ENCODE measurements at regions of chr10 and their contacts with region 1.

Region 1: GRCh38 chr10:100508691-100509150 is 10.9 kb downstream of the SEC31B start:
- DNase-seq: peak; percentile 59
- ATAC-seq: peak; percentile 52
- H3K4me3 Mint-ChIP-seq: peak overlapping the region; percentile 35
- H3K27ac Mint-ChIP-seq: peak overlapping the region; percentile 86
- H3K4me1 Mint-ChIP-seq: peaks cover 69% of the 10 kb centered on the region
- H3K27me3 Mint-ChIP-seq: no peaks in the 10 kb centered on the region

Region 2: GRCh38 chr10:100338434-100339036 is 170.2 kb before region 1 on chr10:
- CTCF ChIA-PET with region 1: interaction called, 34 read pairs
- POLR2A ChIA-PET with region 1: no interaction called
- intact Hi-C with region 1: loop called (anchors 1 kb)
- DNase-seq: peak; percentile 90
- ATAC-seq: peak; percentile 85
- H3K4me3 Mint-ChIP-seq: no peak overlapping the region
- H3K27ac Mint-ChIP-seq: no peak overlapping the region
- H3K4me1 Mint-ChIP-seq: no peaks in the 10 kb centered on the region
- H3K27me3 Mint-ChIP-seq: no peaks in the 10 kb centered on the region

Region 3: DNA sequence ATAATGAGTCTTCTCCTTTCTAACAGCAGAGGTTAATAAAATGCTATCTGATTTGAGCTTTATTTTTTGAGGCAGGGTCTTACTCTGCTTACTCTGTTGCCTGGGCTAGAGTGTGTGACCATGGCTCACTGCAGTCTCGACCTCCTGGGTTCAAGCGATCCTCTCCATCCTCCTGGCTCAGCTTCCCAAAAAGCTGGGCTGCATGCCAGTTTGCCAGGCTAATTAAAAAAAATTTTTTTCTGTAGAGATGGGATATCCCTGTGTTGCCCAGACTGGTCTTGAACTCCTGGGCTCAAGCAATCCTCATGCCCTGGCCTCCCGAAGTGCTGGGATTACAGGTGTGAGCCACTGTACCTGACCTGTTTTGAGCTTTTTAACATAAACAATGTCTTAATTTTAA is 105.0 kb before region 1 on chr10:
- CTCF ChIA-PET with region 1: no interaction called
- POLR2A ChIA-PET with region 1: no interaction called
- intact Hi-C with region 1: no loop called
- DNase-seq: no peak
- ATAC-seq: no peak
- H3K4me3 Mint-ChIP-seq: no peak overlapping the region
- H3K27ac Mint-ChIP-seq: no peak overlapping the region
- H3K4me1 Mint-ChIP-seq: no peaks in the 10 kb centered on the region
- H3K27me3 Mint-ChIP-seq: no peaks in the 10 kb centered on the region

Region 4: DNA sequence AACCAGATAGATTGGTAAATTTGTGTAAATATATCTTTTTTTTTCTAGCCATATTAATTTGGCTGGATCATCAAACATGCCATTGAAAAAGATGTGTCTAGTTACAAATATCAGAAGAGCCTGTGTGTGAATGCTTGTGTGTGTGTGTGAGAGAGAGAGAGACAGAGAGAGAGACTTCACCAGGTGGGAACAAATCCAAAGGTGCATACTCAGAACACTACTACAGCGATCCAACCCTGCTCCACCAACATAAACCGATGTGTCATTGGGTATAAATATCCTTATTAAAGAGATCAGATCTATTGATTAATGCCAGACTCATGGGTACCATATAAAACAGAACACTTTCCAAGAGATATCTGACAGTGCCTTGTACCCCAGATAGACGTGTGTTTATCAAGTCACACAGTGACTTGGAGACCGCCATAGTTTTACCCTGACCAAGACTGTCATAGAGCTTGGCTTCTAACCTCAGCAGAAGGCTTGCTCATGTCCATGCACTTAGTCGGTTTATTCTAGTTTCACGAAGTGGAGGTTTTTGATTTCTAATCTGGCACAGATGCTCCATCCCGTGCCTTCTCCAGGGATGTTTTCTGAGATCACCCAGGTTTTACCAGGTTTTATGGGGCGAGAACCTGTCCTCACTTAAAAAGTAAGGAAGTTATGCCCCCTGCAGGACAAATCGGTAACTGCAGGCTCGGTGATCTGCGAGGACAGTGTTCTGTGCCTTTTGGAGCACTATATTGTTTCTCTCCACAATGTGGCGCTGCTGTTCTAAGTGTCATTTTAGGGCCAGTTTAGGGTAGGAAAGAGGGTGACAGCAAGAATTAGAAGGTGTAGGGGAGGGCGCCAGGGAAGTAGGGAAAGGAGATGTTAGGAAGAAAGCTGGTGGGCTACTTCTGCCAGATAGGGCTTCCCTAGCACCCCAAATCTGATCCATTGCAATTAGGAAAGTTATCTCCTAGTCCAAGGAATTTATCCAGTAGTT is 75.2 kb before region 1 on chr10:
- CTCF ChIA-PET with region 1: interaction called, 117 read pairs
- POLR2A ChIA-PET with region 1: no interaction called
- intact Hi-C with region 1: loop called (anchors 1 kb)
- DNase-seq: peak; percentile 98
- ATAC-seq: peak; percentile 98
- H3K4me3 Mint-ChIP-seq: peak overlapping the region; percentile 7
- H3K27ac Mint-ChIP-seq: no peak overlapping the region
- H3K4me1 Mint-ChIP-seq: peaks cover 5% of the 10 kb centered on the region
- H3K27me3 Mint-ChIP-seq: peaks cover 2% of the 10 kb centered on the region

Region 5: DNA sequence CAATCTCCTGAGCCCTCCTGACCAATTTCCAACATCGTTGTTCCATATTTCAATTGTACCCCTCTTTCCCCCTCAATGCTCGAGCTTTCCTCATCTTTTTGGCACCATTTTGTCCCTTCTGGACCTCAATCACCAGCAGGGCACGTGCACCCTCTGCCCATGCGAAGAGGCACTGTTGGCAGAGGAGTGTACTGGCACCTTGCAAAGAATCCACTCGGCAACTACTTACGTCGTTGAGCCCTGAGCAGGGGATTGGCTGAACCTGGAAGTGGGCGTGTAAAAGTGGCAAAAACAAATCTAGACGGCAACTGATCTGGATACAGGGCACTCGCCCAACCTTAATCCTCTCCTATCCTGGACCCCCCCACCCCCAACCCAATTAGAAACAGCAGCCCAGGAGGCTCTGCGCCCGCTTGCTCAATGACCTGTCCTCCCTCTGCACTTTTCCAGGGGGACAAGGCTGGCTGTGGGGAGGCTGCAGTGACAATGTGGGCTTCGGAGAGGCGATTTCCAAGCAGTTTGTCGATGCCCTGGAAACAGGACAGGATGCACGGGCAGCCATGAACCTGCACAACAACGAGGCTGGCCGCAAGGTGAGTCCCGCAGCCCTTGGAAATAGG is 27.1 kb before region 1 on chr10:
- CTCF ChIA-PET with region 1: interaction called, 131 read pairs
- POLR2A ChIA-PET with region 1: interaction called, 3 read pairs
- intact Hi-C with region 1: loop called (anchors 1 kb)
- DNase-seq: peak; percentile 92
- ATAC-seq: peak; percentile 96
- H3K4me3 Mint-ChIP-seq: peak overlapping the region; percentile 71
- H3K27ac Mint-ChIP-seq: no peak overlapping the region
- H3K4me1 Mint-ChIP-seq: peaks cover 5% of the 10 kb centered on the region
- H3K27me3 Mint-ChIP-seq: peaks cover 13% of the 10 kb centered on the region

Region 6: GRCh38 chr10:100529475-100530298 is 21.0 kb after region 1 on chr10 and contains the start of gene NDUFB8:
- CTCF ChIA-PET with region 1: interaction called, 91 read pairs
- POLR2A ChIA-PET with region 1: interaction called, 6 read pairs
- intact Hi-C with region 1: loop called (anchors 1 kb)
- DNase-seq: peak; percentile 93
- ATAC-seq: peak; percentile 72
- H3K4me3 Mint-ChIP-seq: peak within 1 kb of the TSS; percentile 88
- H3K27ac Mint-ChIP-seq: peak within 1 kb of the TSS; percentile 99
- H3K4me1 Mint-ChIP-seq: peaks cover 37% of the 10 kb centered on the region
- H3K27me3 Mint-ChIP-seq: no peaks in the 10 kb centered on the region
- total RNA-seq, gene NDUFB8: 291 to 375 TPM

Region 7: GRCh38 chr10:100579261-100580090 is 70.8 kb after region 1 on chr10:
- CTCF ChIA-PET with region 1: no interaction called
- POLR2A ChIA-PET with region 1: no interaction called
- intact Hi-C with region 1: no loop called
- DNase-seq: no peak
- ATAC-seq: no peak
- H3K4me3 Mint-ChIP-seq: no peak overlapping the region
- H3K27ac Mint-ChIP-seq: no peak overlapping the region
- H3K4me1 Mint-ChIP-seq: no peaks in the 10 kb centered on the region
- H3K27me3 Mint-ChIP-seq: peaks cover 19% of the 10 kb centered on the region

Region 8: DNA sequence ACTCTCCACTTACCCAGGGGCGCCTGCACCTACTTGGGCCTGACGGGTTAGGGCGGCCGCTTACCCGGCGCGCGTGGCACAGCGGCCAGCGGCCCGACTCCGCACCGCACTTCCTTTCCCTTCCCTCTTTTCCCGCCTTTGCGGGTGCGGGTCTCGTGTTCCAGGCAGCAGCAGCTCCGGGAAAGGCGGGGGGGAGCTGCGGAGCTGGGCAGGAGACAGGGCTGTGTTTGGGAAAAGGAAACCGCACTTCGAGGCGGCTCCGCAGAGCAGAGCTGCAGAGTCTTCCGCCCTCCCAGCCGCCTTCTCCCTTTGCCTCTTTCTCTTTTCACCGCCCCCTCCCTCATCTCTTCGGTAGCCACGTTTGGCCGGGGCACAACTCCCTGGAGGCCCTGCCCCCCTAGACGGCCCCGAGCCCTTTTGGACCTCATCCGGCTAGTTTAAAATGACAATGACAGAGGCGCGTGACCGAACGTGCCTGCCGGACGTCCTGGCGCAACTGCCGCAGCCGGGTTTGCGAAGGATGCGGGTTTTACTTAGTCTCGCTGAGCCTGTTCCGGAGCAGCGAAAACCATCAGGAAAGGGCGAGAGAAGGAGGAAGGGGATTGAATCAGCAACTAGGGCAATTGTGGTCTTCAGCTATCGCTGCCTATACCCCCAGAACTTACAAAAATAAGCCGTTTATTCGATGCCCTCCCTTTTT is 228.8 kb after region 1 on chr10:
- CTCF ChIA-PET with region 1: no interaction called
- POLR2A ChIA-PET with region 1: no interaction called
- intact Hi-C with region 1: no loop called
- DNase-seq: peak; percentile 26
- ATAC-seq: peak; percentile 28
- H3K4me3 Mint-ChIP-seq: peak overlapping the region; percentile 51
- H3K27ac Mint-ChIP-seq: no peak overlapping the region
- H3K4me1 Mint-ChIP-seq: peaks cover 19% of the 10 kb centered on the region
- H3K27me3 Mint-ChIP-seq: peaks cover 84% of the 10 kb centered on the region

Measured in activated CD4-positive, alpha-beta T cell treated with anti-CD3 and anti-CD28 coated beads for 36 hours (primary cell).